ENCODE measurements at regions of chr3 and their contacts with region 1.

Region 1: GRCh38 chr3:36893137-36893557 is 51.7 kb downstream of the TRANK1 start:
- DNase-seq: no peak
- ATAC-seq: peak; percentile 35
- H3K4me3 Mint-ChIP-seq: peak overlapping the region; percentile 78
- H3K27ac Mint-ChIP-seq: peak overlapping the region; percentile 97
- H3K4me1 Mint-ChIP-seq: peaks cover 94% of the 10 kb centered on the region
- H3K27me3 Mint-ChIP-seq: no peaks in the 10 kb centered on the region
- CTCF ChIP-seq: no peak

Region 2: GRCh38 chr3:36876181-36876936 is 16.8 kb before region 1 on chr3:
- CTCF ChIA-PET with region 1: interaction called, 11 read pairs
- POLR2A ChIA-PET with region 1: interaction called, 27 read pairs
- intact Hi-C with region 1: loop called (anchors 1 kb)
- DNase-seq: no peak
- ATAC-seq: peak; percentile 85
- H3K4me3 Mint-ChIP-seq: peak overlapping the region; percentile 75
- H3K27ac Mint-ChIP-seq: peak overlapping the region; percentile 96
- H3K4me1 Mint-ChIP-seq: peaks cover 55% of the 10 kb centered on the region
- H3K27me3 Mint-ChIP-seq: no peaks in the 10 kb centered on the region
- CTCF ChIP-seq: no peak

Region 3: GRCh38 chr3:36911990-36912804 is 19.1 kb after region 1 on chr3:
- CTCF ChIA-PET with region 1: interaction called, 26 read pairs
- POLR2A ChIA-PET with region 1: interaction called, 185 read pairs
- intact Hi-C with region 1: loop called (anchors 1 kb)
- DNase-seq: no peak
- ATAC-seq: peak; percentile 78
- H3K4me3 Mint-ChIP-seq: peak overlapping the region; percentile 41
- H3K27ac Mint-ChIP-seq: peak overlapping the region; percentile 93
- H3K4me1 Mint-ChIP-seq: peaks cover 69% of the 10 kb centered on the region
- H3K27me3 Mint-ChIP-seq: no peaks in the 10 kb centered on the region
- CTCF ChIP-seq: no peak

Region 4: DNA sequence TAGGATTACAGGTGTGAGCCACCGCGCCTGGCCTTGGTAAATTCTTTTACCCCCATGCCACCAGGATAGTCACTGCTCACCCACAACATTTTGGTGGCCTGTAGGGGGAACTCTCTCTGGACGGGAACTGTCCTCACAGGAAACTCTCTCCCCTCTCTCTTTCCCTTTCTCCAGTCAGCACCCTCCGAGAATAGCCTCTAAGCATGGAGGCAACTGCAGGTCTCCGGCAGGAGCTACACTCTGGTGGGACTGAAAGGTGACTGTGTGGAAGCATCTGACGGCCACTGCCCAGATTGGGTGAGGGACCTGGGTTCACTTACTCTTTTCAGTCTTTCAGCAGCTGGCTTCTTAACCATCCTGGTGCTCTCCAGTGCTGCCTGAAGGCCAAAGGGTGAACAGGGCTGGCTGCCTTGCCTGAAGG is 30.4 kb after region 1 on chr3:
- CTCF ChIA-PET with region 1: no interaction called
- POLR2A ChIA-PET with region 1: interaction called, 17 read pairs
- intact Hi-C with region 1: loop called (anchors 1 kb)
- DNase-seq: no peak
- ATAC-seq: no peak
- H3K4me3 Mint-ChIP-seq: peak overlapping the region; percentile 85
- H3K27ac Mint-ChIP-seq: peak overlapping the region; percentile 87
- H3K4me1 Mint-ChIP-seq: peaks cover 60% of the 10 kb centered on the region
- H3K27me3 Mint-ChIP-seq: no peaks in the 10 kb centered on the region
- CTCF ChIP-seq: no peak

Region 5: DNA sequence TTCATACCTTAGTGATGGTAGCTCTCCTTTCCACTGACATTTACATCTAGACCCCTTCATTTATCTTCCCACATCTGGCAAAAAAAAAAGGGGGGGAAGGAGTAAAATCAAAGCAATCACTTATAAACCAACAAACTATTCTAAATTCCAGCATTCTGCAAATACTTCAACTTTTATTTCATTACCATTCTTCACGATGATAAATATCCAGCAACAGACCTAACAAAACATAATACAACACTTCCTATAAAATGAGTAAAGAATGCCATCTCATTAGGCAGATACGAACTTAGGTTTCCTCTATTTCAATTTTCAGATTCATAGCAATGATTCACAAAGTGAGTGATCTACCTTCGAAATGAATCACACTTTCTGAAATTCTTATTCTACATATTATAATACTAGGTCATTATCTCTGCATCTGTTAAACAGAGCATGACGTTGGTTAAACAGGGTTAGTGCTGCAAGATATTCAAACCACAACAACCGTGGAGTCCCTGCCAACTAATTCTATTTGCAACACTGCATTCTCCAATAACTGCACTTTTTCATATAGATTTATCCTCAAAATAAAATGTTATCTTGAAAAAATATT is 281.5 kb after region 1 on chr3 and contains the start of gene LRRFIP2:
- CTCF ChIA-PET with region 1: no interaction called
- POLR2A ChIA-PET with region 1: no interaction called
- intact Hi-C with region 1: no loop called
- DNase-seq: no peak
- ATAC-seq: peak; percentile 28
- H3K4me3 Mint-ChIP-seq: peak within 1 kb of the TSS; percentile 89
- H3K27ac Mint-ChIP-seq: peak within 1 kb of the TSS; percentile 78
- H3K4me1 Mint-ChIP-seq: peaks cover 35% of the 10 kb centered on the region
- H3K27me3 Mint-ChIP-seq: no peaks in the 10 kb centered on the region
- CTCF ChIP-seq: no peak
- total RNA-seq, gene LRRFIP2: 33.9 and 35.3 TPM in 2 replicates

Region 6: DNA sequence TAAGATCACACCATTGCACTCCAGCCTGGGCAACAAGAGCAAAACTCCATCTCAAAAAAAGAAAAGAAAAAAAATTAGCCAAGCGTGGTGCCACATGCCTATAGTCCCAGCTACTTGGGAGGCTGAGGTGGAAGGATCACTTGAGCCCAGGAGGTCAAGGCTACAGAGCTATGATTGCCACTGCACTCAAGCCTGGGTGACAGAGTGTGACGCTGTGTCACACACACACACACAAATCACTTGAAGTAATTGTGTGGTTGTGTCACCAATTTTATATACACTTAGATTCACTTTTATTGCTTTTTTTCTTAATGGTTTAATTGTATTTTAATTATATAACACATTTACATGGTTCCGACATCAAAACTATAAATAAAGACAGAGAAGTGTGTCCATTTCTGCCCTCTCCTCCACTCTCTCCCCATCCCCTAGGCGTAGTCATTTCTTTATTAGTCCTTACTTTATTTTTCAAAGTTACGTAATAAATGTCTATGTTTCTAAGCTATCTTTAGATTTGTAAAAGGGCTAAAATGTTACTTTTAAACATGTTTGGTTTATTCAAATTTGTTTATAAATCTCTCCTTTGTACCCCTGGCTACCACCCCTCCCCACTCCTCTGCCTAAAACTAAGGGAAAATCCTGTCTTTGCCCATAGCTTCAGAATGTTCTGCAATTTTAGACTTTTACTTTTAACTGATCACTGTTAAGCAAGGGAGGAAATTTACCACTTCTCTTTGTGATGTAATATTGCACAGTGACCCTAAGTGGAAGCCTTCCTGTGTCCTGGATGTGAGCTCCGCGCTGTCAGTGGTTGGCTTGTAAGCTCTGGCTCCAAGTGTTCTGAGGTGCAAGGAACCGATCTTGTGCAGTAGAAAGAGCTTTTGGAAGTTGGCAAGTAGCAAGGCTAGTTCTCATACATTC is 1086.7 kb after region 1 on chr3:
- CTCF ChIA-PET with region 1: no interaction called
- POLR2A ChIA-PET with region 1: no interaction called
- intact Hi-C with region 1: no loop called
- DNase-seq: no peak
- ATAC-seq: no peak
- H3K4me3 Mint-ChIP-seq: no peak overlapping the region
- H3K27ac Mint-ChIP-seq: no peak overlapping the region
- H3K4me1 Mint-ChIP-seq: no peaks in the 10 kb centered on the region
- H3K27me3 Mint-ChIP-seq: peaks cover 2% of the 10 kb centered on the region
- CTCF ChIP-seq: no peak

Measured in activated B cell treated with CpG ODN at 0.5 μM for 24 hours (primary cell).